Activated B cell treated with CpG ODN at 0.5 μM for 24 hours (primary cell): ENCODE measurements at regions of chr11 and their contacts with region 1.

Region 1: GRCh38 chr11:124961972-124962609 is 8.1 kb downstream of the CCDC15 start:
- DNase-seq: no peak
- ATAC-seq: peak; percentile 82
- H3K4me3 Mint-ChIP-seq: no peak overlapping the region
- H3K27ac Mint-ChIP-seq: no peak overlapping the region
- H3K4me1 Mint-ChIP-seq: no peaks in the 10 kb centered on the region
- H3K27me3 Mint-ChIP-seq: no peaks in the 10 kb centered on the region
- CTCF ChIP-seq: no peak

Region 2: DNA sequence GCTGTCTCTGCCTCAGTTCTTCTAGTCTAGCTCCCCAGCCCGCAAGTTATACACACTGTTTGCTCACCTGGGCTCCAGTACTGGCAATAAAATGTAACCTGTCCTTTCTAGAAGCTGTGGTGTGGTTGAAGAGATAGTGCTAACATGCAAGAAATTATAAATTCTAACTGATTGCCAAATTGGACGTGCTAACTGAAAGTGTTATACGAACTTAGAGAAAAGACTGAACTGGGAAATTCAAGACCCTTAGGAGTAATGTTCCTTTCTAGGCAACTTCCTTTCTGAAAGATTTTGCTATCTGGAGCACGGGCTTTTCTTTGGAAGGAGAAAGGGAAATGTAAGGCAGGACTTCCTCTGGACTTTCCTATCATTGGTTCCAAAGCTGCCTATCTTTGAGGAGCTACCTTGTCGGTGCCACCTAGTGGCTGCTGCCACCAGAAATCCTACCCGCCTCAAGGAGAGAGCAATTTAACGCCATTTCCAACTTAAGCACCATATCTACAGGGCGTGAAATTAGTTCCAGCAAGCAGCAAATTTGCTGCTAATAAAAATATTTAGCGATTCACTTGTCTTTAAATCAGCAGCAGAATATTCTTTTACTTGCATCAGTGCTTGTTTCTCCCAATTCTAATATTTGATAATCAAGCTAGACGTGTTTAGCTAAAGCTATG is 162.0 kb after region 1 on chr11:
- CTCF ChIA-PET with region 1: interaction called, 6 read pairs
- POLR2A ChIA-PET with region 1: no interaction called
- intact Hi-C with region 1: loop called (anchors 1 kb)
- DNase-seq: no peak
- ATAC-seq: peak; percentile 71
- H3K4me3 Mint-ChIP-seq: peak overlapping the region; percentile 26
- H3K27ac Mint-ChIP-seq: no peak overlapping the region
- H3K4me1 Mint-ChIP-seq: peaks cover 14% of the 10 kb centered on the region
- H3K27me3 Mint-ChIP-seq: peaks cover 32% of the 10 kb centered on the region
- CTCF ChIP-seq: no peak

Region 3: GRCh38 chr11:125348674-125349309 is 386.7 kb after region 1 on chr11:
- CTCF ChIA-PET with region 1: interaction called, 5 read pairs
- POLR2A ChIA-PET with region 1: no interaction called
- intact Hi-C with region 1: loop called (anchors 1 kb)
- DNase-seq: peak; percentile 31
- ATAC-seq: peak; percentile 54
- H3K4me3 Mint-ChIP-seq: no peak overlapping the region
- H3K27ac Mint-ChIP-seq: no peak overlapping the region
- H3K4me1 Mint-ChIP-seq: no peaks in the 10 kb centered on the region
- H3K27me3 Mint-ChIP-seq: peaks cover 21% of the 10 kb centered on the region
- CTCF ChIP-seq: peak; percentile 40

Region 4: GRCh38 chr11:125429166-125429707 is 467.1 kb after region 1 on chr11:
- CTCF ChIA-PET with region 1: interaction called, 3 read pairs
- POLR2A ChIA-PET with region 1: no interaction called
- intact Hi-C with region 1: loop called (anchors 1 kb)
- DNase-seq: no peak
- ATAC-seq: no peak
- H3K4me3 Mint-ChIP-seq: no peak overlapping the region
- H3K27ac Mint-ChIP-seq: no peak overlapping the region
- H3K4me1 Mint-ChIP-seq: peaks cover 2% of the 10 kb centered on the region
- H3K27me3 Mint-ChIP-seq: peaks cover 15% of the 10 kb centered on the region
- CTCF ChIP-seq: no peak